CD4-positive, alpha-beta memory T cell (primary cell): ENCODE measurements at regions of chr7 and their contacts with region 1.

Region 1: DNA sequence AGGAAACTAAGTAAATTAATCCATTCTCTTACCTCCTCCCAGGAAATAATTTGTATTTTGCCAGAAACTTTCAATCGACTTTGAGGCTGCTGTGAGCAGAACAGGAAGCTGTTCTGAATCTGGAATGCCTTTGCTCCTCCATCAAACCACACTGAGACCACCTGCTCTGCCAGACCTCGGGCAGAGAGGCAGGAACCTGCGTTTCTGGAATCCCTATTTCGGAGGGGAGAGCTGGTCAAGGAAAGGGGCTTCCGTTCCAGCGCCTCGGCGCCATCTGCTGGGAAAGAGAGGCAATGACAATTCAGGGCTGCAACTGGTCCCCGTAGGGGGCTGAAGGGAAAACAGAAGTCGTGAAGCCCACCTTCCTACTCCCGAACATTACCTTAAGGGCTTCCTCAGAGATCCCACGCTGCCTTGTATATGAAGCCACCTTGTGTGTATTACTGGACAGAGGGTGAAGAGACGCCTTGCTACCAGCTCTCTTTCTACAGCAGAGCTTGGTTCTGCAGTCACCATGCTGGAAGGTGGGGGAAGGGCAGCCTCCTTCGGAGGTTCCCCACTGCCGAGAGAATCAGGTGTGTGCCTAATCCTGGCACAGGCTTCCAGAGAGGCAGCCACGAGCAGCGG is 31.2 kb downstream of the ZNF467 start:
- DNase-seq: peak in 4 of 5 donors; percentile 32 to 51 (median 42)
- H3K4me3 ChIP-seq: peak overlapping the region in 1 of 2 donors; percentile 0
- H3K4me3 Mint-ChIP-seq: peak overlapping the region; percentile 45 to 88 (median 64)
- H3K27ac ChIP-seq: no peak overlapping the region
- H3K27ac Mint-ChIP-seq: peak overlapping the region in 1 of 7 donors; percentile 42
- H3K4me1 ChIP-seq: peaks cover 10% of the 10 kb centered on the region
- H3K4me1 Mint-ChIP-seq: peaks cover 7 to 11% (median 10%) of the 10 kb centered on the region in 4 donors
- H3K27me3 ChIP-seq: peaks cover 12% of the 10 kb centered on the region
- H3K27me3 Mint-ChIP-seq: peaks cover 19 to 30% of the 10 kb centered on the region in 2 donors

Region 2: DNA sequence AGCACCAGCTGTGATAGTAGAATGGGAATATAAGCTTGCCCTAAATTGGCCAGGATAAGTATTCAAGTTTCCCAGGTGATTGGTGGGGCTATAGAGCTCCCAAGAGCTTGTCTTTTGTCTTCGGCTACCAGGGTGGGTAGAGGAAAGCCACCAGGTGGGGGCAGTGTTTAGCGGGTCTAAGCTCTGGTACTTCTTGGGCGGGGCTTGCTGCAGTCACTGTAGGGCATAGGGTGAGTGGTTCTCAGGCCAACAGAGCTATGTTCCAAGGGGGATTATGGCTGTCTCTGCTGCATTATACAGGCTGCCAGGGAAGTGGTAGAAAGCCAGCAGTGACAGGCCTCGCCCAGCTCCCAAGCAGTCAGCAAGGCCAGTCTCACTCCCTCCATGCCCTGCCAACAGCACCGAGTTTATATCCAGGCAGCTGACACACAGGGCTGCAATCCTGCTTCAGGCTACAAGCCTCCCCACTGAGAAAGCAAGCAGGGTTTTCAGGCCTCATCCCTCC is 79.5 kb before region 1 on chr7:
- CTCF ChIA-PET with region 1: interaction called, 37 read pairs
- POLR2A ChIA-PET with region 1: no interaction called
- intact Hi-C with region 1: loop called (anchors 1 kb)
- DNase-seq: peak; percentile 42 to 63 (median 48)
- H3K4me3 ChIP-seq: no peak overlapping the region
- H3K4me3 Mint-ChIP-seq: no peak overlapping the region
- H3K27ac ChIP-seq: no peak overlapping the region
- H3K27ac Mint-ChIP-seq: no peak overlapping the region
- H3K4me1 ChIP-seq: no peaks in the 10 kb centered on the region
- H3K4me1 Mint-ChIP-seq: no peaks in the 10 kb centered on the region
- H3K27me3 ChIP-seq: no peaks in the 10 kb centered on the region
- H3K27me3 Mint-ChIP-seq: peaks cover 22 to 49% of the 10 kb centered on the region in 2 donors

Region 3: DNA sequence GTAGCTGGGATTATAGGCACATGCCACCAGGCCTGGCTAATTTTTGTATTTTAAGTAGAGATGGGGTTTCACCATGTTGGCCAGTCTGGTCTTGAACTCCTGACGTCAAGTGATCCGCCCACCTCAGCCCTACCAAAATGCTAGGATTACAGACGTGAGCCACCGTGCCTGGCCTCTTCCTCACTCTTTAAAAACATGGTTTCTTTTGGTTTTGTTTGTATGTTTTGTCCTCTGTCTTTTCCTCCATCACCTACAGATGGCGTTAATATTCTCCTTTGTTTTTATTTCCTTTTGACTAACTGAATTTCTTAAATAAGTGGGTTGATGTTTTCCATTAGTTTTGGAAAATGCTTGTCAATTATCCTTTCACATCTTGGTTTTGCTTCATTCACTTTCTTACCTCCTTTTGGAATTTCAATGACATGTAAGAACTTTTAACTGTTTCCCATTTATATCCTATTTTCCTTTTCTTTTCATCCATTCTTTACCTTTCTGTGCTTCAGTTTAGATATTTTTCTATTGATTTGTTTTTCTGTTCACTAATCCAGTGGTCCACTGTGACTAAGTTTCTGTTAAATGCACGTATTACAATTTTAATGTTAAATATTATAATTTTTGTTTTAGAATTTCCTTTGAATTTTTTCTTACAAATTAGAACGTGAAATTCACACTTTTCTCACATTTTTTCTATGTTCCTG is 72.9 kb before region 1 on chr7:
- CTCF ChIA-PET with region 1: interaction called, 11 read pairs
- POLR2A ChIA-PET with region 1: no interaction called
- intact Hi-C with region 1: loop called (anchors 1 kb)
- DNase-seq: peak in 4 of 5 donors; percentile 8 to 26 (median 8)
- H3K4me3 ChIP-seq: no peak overlapping the region
- H3K4me3 Mint-ChIP-seq: no peak overlapping the region
- H3K27ac ChIP-seq: no peak overlapping the region
- H3K27ac Mint-ChIP-seq: no peak overlapping the region
- H3K4me1 ChIP-seq: no peaks in the 10 kb centered on the region
- H3K4me1 Mint-ChIP-seq: peaks cover 0 to 2% (median under 1%) of the 10 kb centered on the region in 4 donors
- H3K27me3 ChIP-seq: no peaks in the 10 kb centered on the region
- H3K27me3 Mint-ChIP-seq: peaks cover 21 to 61% of the 10 kb centered on the region in 2 donors

Region 4: GRCh38 chr7:149799397-149800171 is 57.4 kb after region 1 on chr7:
- CTCF ChIA-PET with region 1: interaction called, 11 read pairs
- POLR2A ChIA-PET with region 1: no interaction called
- intact Hi-C with region 1: loop called (anchors 1 kb)
- DNase-seq: peak; percentile 43 to 59 (median 56)
- H3K4me3 ChIP-seq: no peak overlapping the region
- H3K4me3 Mint-ChIP-seq: no peak overlapping the region
- H3K27ac ChIP-seq: no peak overlapping the region
- H3K27ac Mint-ChIP-seq: no peak overlapping the region
- H3K4me1 ChIP-seq: no peaks in the 10 kb centered on the region
- H3K4me1 Mint-ChIP-seq: peaks cover 0 to 4% (median 0%) of the 10 kb centered on the region in 4 donors
- H3K27me3 ChIP-seq: no peaks in the 10 kb centered on the region
- H3K27me3 Mint-ChIP-seq: peaks cover 0 to 2% of the 10 kb centered on the region in 2 donors

Region 5: DNA sequence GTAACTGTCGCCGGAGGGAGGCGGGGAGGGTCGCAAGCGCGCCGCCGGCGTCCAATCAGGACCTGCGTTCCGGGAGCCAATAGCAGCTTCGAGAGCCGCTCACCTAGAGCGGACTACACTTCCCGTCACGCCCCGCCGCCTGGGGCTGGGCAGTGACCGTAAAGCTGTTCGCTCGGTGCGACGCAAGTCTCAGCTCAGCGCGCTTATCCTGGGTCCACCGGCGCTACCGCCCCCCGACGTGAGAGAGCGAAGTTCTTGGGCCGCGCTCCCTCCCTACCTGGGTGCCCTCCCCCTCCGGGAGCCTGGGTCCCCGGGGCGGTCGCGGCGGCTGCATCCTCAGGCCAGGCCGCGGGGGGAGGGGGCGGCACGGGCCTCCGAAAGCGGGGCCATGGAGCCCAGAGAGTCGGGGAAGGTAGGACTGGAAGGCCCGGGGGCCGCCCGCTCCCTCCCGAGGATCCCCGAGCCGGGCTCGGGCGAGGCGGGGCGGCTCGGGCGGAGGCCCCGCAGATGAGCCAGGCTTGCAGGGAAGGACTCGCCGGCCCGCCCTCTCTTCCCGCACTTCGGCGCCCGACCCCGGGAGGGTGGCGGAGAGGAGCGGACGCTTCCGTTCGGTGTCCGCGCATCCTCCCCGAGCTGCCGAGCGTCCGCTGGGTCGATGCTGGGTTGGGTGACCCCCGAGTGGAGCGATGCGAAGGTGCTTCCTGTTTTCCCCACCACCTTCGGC is 96.2 kb after region 1 on chr7 and contains the start of gene ZNF862:
- CTCF ChIA-PET with region 1: no interaction called
- POLR2A ChIA-PET with region 1: no interaction called
- intact Hi-C with region 1: no loop called
- DNase-seq: peak; percentile 93 to 96 (median 95)
- H3K4me3 ChIP-seq: peak within 1 kb of the TSS; percentile 21 to 79
- H3K4me3 Mint-ChIP-seq: peak within 1 kb of the TSS; percentile 91 to 97 (median 94)
- H3K27ac ChIP-seq: peak within 1 kb of the TSS; percentile 69
- H3K27ac Mint-ChIP-seq: peak within 1 kb of the TSS; percentile 88 to 97 (median 94)
- H3K4me1 ChIP-seq: peaks cover 16% of the 10 kb centered on the region
- H3K4me1 Mint-ChIP-seq: peaks cover 24 to 44% (median 39%) of the 10 kb centered on the region in 4 donors
- H3K27me3 ChIP-seq: no peaks in the 10 kb centered on the region
- H3K27me3 Mint-ChIP-seq: peaks cover 5 to 10% of the 10 kb centered on the region in 2 donors
- total RNA-seq, gene ZNF862: 84.2 to 88.6 TPM